ENCODE measurements at regions of chrX and their contacts with region 1.

Region 1: DNA sequence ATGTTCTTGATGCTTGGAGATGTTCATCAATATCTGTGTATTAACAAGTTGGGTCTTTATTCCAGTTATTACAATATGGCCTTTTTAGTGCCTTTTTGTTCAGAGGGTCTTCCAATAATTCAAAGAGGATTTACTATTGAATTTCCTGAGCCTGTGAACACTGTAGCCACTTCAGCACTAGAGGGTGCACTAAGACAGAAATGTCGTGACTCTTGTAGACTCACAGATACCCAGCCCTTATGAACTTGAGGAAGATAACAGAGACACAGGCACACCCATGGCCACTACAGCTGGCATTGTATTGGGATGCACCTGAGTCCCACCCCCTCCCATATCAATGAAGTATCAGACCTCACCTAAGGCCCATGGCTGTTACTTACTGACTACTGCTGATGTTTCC is 54.4 kb upstream of the ACTRT1 start:
- DNase-seq: peak; percentile 17
- ATAC-seq: peak; percentile 69; the same call in 1 of the 2 replicates
- H3K4me3 ChIP-seq: no peak overlapping the region
- H3K27ac ChIP-seq: no peak overlapping the region
- H3K4me1 ChIP-seq: no peaks in the 10 kb centered on the region
- H3K27me3 ChIP-seq: no peaks in the 10 kb centered on the region
- CTCF ChIP-seq: peak; percentile 55; the same call in 1 of the 2 replicates

Region 2: DNA sequence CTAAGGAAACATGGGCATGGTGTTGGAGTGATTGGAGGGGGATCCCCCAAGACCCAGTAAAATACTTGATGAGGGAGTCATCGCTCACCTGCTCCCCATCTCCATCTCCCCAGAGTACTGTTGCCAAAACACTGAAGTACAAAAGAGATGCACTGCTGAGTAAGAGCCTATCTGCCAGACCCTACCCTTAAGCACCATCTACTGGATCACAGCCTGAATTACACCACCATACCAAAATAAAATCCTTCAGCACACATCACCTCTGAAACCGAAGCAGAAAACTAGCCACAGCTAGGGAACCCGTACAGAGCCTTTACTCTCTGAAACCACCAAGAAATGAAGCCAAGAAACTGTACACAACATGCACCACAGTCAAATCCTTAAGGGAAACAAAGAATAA is 411.9 kb after region 1 on chrX:
- CTCF ChIA-PET with region 1: no interaction called
- POLR2A ChIA-PET with region 1: no interaction called
- in situ Hi-C with region 1: no loop called
- intact Hi-C with region 1: loop called (anchors 5 kb)
- DNase-seq: no peak
- ATAC-seq: no peak; the same call in 1 of the 2 replicates
- H3K4me3 ChIP-seq: no peak overlapping the region
- H3K27ac ChIP-seq: no peak overlapping the region
- H3K4me1 ChIP-seq: no peaks in the 10 kb centered on the region
- H3K27me3 ChIP-seq: no peaks in the 10 kb centered on the region
- CTCF ChIP-seq: peak; percentile 57

Region 3: DNA sequence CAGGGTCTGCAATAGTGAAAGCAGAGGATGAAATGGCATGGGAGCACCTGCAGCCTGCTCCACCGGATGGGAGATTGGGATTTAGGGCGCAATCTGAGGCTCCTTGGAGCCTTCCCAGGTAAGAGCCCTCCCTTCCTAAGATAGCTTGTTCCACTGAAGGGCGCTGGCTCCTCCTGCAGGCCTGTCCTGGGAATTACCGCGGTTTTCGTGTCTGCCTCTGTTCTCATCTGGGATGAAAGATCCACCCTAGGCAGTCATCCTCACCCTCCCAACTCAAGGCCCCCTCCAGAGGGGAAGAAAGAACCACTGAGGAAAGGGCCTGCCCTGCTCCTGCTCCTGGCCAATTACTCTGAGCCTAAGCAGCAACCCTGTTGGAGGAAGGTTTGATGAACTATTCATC is 869.1 kb after region 1 on chrX:
- CTCF ChIA-PET with region 1: no interaction called
- POLR2A ChIA-PET with region 1: no interaction called
- in situ Hi-C with region 1: no loop called
- intact Hi-C with region 1: loop called (anchors 5 kb)
- DNase-seq: peak; percentile 10
- ATAC-seq: peak; percentile 83
- H3K4me3 ChIP-seq: no peak overlapping the region
- H3K27ac ChIP-seq: no peak overlapping the region
- H3K4me1 ChIP-seq: no peaks in the 10 kb centered on the region
- H3K27me3 ChIP-seq: no peaks in the 10 kb centered on the region
- CTCF ChIP-seq: peak; percentile 89